ENCODE measurements at regions of chr4 and their contacts with region 1.

Region 1: GRCh38 chr4:119151161-119151560 is 15.5 kb downstream of the MYOZ2 start:
- DNase-seq: no peak
- ATAC-seq: peak; percentile 76
- H3K4me3 ChIP-seq: no peak overlapping the region
- H3K27ac ChIP-seq: peak overlapping the region in 1 of 2 donors; percentile 28
- H3K4me1 ChIP-seq: no peaks in the 10 kb centered on the region
- H3K27me3 ChIP-seq: no peaks in the 10 kb centered on the region

Region 2: DNA sequence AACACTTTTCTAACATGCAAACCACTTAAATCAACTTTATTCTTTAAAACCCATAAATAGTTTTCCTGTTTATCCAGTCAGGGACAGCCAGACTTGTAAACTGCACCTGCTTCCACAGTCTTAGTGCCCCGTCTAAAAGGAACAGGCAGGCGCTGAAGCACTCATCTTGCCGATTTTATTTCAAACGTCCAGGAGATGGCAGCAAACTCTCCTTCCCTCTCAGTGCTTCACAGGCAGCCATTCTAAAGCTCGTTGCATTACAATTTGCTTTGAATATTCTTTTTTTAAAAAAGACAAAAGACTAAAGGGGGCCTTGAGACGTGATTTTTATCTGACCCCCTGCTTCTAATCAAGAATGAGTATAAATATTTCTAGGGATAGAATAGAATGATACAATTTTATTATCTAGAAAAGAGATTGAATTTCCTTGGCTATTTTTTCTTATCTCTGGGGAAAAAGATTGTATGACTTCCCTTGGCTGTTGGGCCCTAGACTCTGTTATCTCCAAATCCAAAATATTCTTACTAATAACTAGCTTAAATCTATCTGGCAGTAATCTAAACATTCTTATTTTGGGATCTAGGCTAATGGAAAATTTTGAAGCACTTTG is 109.1 kb before region 1 on chr4:
- intact Hi-C with region 1: loop called in 1 of 2 experiments (anchors 5 kb)
- DNase-seq: peak; percentile 50 to 59
- ATAC-seq: peak; percentile 78
- H3K4me3 ChIP-seq: peak overlapping the region in 1 of 2 donors; percentile 48
- H3K27ac ChIP-seq: peak overlapping the region in 1 of 2 donors; percentile 90
- H3K4me1 ChIP-seq: peaks cover 4 to 11% of the 10 kb centered on the region in 2 donors
- H3K27me3 ChIP-seq: no peaks in the 10 kb centered on the region

Region 3: DNA sequence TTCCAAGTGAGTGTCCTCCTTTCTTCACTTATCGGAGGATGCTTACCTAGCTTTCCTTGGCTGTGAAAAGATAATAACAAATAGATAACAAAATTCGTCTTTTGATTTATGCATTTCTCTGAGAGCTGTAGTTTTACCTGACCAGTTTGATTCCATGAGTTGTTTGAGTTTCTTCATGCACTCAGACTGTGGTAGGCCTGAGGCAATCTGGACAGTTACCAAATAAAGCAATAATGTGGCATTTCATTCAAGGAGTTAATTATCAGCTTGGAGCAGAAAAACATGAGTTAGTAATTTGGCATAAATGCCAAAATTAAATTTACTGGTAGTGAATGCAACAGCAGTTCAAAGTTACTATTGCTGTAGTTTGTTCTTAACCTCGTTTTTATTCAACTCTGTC is 117.3 kb after region 1 on chr4:
- intact Hi-C with region 1: loop called in 1 of 2 experiments (anchors 10 kb)
- DNase-seq: no peak
- ATAC-seq: no peak
- H3K4me3 ChIP-seq: no peak overlapping the region
- H3K27ac ChIP-seq: no peak overlapping the region
- H3K4me1 ChIP-seq: no peaks in the 10 kb centered on the region
- H3K27me3 ChIP-seq: no peaks in the 10 kb centered on the region

Measured in aorta (tissue), 5 donors.